Naive thymus-derived CD4-positive, alpha-beta T cell (primary cell): ENCODE measurements at regions of chr2 and their contacts with region 1.

Region 1: GRCh38 chr2:227996366-227996765 is 124.9 kb downstream of the DAW1 start:
- DNase-seq: no peak
- ATAC-seq: no peak
- H3K4me3 ChIP-seq: no peak overlapping the region
- H3K4me3 Mint-ChIP-seq: no peak overlapping the region
- H3K27ac ChIP-seq: no peak overlapping the region
- H3K27ac Mint-ChIP-seq: no peak overlapping the region
- H3K4me1 ChIP-seq: no peaks in the 10 kb centered on the region
- H3K4me1 Mint-ChIP-seq: no peaks in the 10 kb centered on the region
- H3K27me3 ChIP-seq: no peaks in the 10 kb centered on the region
- H3K27me3 Mint-ChIP-seq: peaks cover 0 to 11% (median 0%) of the 10 kb centered on the region in 5 donors

Region 2: DNA sequence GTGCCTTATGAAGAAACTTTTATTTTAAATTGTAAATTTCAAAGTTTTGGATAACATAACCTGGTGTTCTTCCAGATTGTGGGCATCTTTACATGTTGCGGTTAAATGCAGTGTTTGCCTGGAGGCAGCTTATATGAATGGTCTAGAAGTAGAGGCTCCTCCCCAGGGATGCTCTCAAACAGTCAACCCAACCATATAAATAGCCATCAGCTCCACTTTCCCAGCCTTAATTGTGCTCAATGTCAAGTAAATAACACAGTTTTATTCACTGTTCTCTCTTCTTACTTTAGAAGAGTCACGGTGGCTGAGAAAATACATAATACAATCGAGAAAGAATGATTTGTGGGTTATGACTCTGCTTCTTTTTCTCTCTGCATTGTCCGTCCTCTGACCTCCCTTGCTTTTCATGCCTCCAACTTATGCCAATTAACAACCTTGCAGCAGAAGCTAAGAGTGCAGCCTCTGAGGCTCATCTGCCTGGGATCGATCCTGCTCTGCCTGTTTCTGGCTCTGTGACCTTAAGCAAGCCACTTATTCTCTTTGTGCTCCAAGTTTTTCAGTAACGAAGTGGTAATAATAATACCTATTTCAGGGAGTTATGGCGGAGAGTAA is 24.6 kb before region 1 on chr2:
- CTCF ChIA-PET with region 1: no interaction called
- POLR2A ChIA-PET with region 1: no interaction called
- intact Hi-C with region 1: no loop called
- DNase-seq: no peak
- ATAC-seq: no peak
- H3K4me3 ChIP-seq: no peak overlapping the region
- H3K4me3 Mint-ChIP-seq: no peak overlapping the region
- H3K27ac ChIP-seq: no peak overlapping the region
- H3K27ac Mint-ChIP-seq: no peak overlapping the region
- H3K4me1 ChIP-seq: no peaks in the 10 kb centered on the region
- H3K4me1 Mint-ChIP-seq: no peaks in the 10 kb centered on the region
- H3K27me3 ChIP-seq: no peaks in the 10 kb centered on the region
- H3K27me3 Mint-ChIP-seq: peaks cover 0 to 16% (median 3%) of the 10 kb centered on the region in 5 donors

Region 3: GRCh38 chr2:228063558-228063957 is 67.2 kb after region 1 on chr2:
- CTCF ChIA-PET with region 1: no interaction called
- POLR2A ChIA-PET with region 1: no interaction called
- intact Hi-C with region 1: loop called in 1 of 2 experiments (anchors 2 kb)
- DNase-seq: no peak
- ATAC-seq: no peak
- H3K4me3 ChIP-seq: no peak overlapping the region
- H3K4me3 Mint-ChIP-seq: no peak overlapping the region
- H3K27ac ChIP-seq: no peak overlapping the region
- H3K27ac Mint-ChIP-seq: no peak overlapping the region
- H3K4me1 ChIP-seq: no peaks in the 10 kb centered on the region
- H3K4me1 Mint-ChIP-seq: no peaks in the 10 kb centered on the region
- H3K27me3 ChIP-seq: no peaks in the 10 kb centered on the region
- H3K27me3 Mint-ChIP-seq: no peaks in the 10 kb centered on the region